H1 (cell line): ENCODE measurements at regions of chr12 and their contacts with region 1.

Region 1: GRCh38 chr12:121230538-121230907 is 20.6 kb downstream of the P2RX4 start:
- DNase-seq: no peak
- H3K4me3 ChIP-seq: no peak overlapping the region
- H3K27ac ChIP-seq: no peak overlapping the region
- H3K4me1 ChIP-seq: no peaks in the 10 kb centered on the region
- H3K27me3 ChIP-seq: no peaks in the 10 kb centered on the region
- CTCF ChIP-seq: no peak
- EP300 ChIP-seq: no peak
- POLR2A ChIP-seq: no peak
- RAD21 ChIP-seq: no peak

Region 2: GRCh38 chr12:121181181-121181580 is 49.3 kb before region 1 on chr12:
- CTCF ChIA-PET with region 1: no interaction called
- POLR2A ChIA-PET with region 1: no interaction called
- DNase-seq: no peak
- H3K4me3 ChIP-seq: no peak overlapping the region
- H3K27ac ChIP-seq: no peak overlapping the region
- H3K4me1 ChIP-seq: no peaks in the 10 kb centered on the region
- H3K27me3 ChIP-seq: no peaks in the 10 kb centered on the region
- CTCF ChIP-seq: no peak
- EP300 ChIP-seq: no peak
- POLR2A ChIP-seq: no peak
- RAD21 ChIP-seq: no peak

Region 3: DNA sequence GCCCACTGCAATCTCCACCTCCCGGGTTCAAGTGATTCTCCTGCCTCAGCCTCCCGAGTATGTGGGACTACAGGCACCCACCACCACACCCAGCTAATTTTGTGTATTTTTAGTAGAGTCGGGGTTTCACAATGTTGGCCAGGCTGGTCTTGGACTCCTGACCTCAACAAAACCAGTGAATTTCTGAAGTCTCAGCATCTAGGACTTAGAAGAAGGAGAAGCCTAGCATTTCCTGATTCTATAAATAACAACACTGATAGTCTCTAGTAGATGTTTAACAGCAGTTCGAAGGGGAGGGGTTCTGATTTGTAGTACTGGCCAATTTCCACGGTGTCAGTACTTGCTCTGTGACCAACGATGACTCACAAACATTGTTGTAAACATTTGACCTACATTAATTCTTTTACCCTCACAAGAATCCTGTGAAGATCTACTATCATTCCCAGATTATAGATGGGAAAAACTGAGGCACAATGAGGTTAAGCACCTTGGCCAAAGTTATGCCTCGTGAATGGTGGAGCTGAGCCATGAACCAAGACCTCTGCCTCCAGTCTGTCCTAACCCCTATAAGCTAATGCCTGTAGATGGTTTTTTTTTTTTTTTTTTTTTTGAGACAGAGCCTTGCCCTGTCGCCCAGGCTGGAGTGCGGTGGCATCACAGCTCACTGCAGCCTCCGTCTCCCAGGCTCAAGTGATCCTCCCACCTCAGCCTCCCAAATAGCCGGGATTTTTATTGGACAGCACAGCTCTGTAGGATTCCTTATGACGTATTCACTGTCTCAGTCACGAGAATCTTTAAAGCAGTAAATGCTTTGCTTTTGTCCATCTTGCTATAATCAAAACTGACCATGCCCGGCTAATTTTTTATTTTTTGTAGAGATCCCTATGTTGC is 15.4 kb before region 1 on chr12:
- CTCF ChIA-PET with region 1: interaction called, 19 read pairs
- POLR2A ChIA-PET with region 1: interaction called, 3 read pairs
- DNase-seq: no peak
- H3K4me3 ChIP-seq: no peak overlapping the region
- H3K27ac ChIP-seq: no peak overlapping the region
- H3K4me1 ChIP-seq: peaks cover 0 to 4% (median 0%) of the 10 kb centered on the region in 4 experiments; a peak in 3 of 7 replicates
- H3K27me3 ChIP-seq: no peaks in the 10 kb centered on the region
- CTCF ChIP-seq: no peak
- EP300 ChIP-seq: no peak
- POLR2A ChIP-seq: no peak
- RAD21 ChIP-seq: no peak

Region 4: GRCh38 chr12:121240484-121241101 is 10.1 kb after region 1 on chr12:
- CTCF ChIA-PET with region 1: interaction called, 24 read pairs
- POLR2A ChIA-PET with region 1: interaction called, 3 read pairs
- DNase-seq: peak in 1 of 2 experiments; percentile 61
- H3K4me3 ChIP-seq: no peak overlapping the region
- H3K27ac ChIP-seq: no peak overlapping the region
- H3K4me1 ChIP-seq: peaks cover 0 to 16% (median 7%) of the 10 kb centered on the region in 4 experiments; a peak in 6 of 7 replicates
- H3K27me3 ChIP-seq: no peaks in the 10 kb centered on the region
- CTCF ChIP-seq: peak in 2 of 3 experiments; percentile 11 to 24; a peak in 2 of 4 replicates
- EP300 ChIP-seq: no peak
- POLR2A ChIP-seq: no peak
- RAD21 ChIP-seq: no peak

Region 5: GRCh38 chr12:121513464-121514183 is 283.1 kb after region 1 on chr12:
- CTCF ChIA-PET with region 1: no interaction called
- POLR2A ChIA-PET with region 1: no interaction called
- DNase-seq: peak; percentile 38 to 78
- H3K4me3 ChIP-seq: no peak overlapping the region
- H3K27ac ChIP-seq: no peak overlapping the region
- H3K4me1 ChIP-seq: peaks cover 0 to 3% (median 1%) of the 10 kb centered on the region in 4 experiments; a peak in 4 of 7 replicates
- H3K27me3 ChIP-seq: no peaks in the 10 kb centered on the region
- CTCF ChIP-seq: peak in 1 of 3 experiments; percentile 21; a peak in 1 of 4 replicates
- EP300 ChIP-seq: no peak
- POLR2A ChIP-seq: no peak
- RAD21 ChIP-seq: no peak; a peak in 1 of 4 replicates